ENCODE measurements at regions of chr7 and their contacts with region 1.

Region 1: GRCh38 chr7:11817111-11817740 is 14.8 kb downstream of the THSD7A start:
- DNase-seq: no peak
- ATAC-seq: peak; percentile 21 to 42; a peak in 1 of 6 replicates
- H3K4me3 ChIP-seq: no peak overlapping the region
- H3K27ac ChIP-seq: peak overlapping the region; percentile 67 to 75
- H3K4me1 ChIP-seq: peaks cover 42% of the 10 kb centered on the region
- CTCF ChIP-seq: no peak
- EP300 ChIP-seq: no peak
- POLR2A ChIP-seq: no peak
- RAD21 ChIP-seq: no peak

Region 2: DNA sequence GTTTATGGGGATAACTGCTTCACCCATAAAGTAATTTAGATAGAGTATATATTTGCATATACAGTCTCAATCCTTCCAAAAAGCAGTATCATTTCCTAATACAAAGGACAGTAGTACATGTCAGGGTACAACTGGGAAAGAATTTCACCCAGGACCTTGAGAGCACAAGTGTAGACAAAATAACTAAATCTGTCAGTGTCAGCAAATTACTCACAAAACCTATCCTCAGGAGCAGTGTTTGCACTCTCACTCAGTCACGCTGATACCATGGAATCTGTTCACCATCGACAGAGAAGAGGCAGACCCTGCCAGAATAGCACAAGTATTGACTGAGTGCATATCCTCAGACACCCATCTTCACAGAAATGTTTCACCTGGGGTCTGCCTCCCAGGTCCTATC is 1398.2 kb before region 1 on chr7:
- CTCF ChIA-PET with region 1: no interaction called
- POLR2A ChIA-PET with region 1: no interaction called
- DNase-seq: no peak
- ATAC-seq: no peak
- H3K4me3 ChIP-seq: no peak overlapping the region
- H3K27ac ChIP-seq: no peak overlapping the region
- H3K4me1 ChIP-seq: no peaks in the 10 kb centered on the region
- CTCF ChIP-seq: no peak
- EP300 ChIP-seq: no peak
- POLR2A ChIP-seq: no peak
- RAD21 ChIP-seq: no peak

Region 3: DNA sequence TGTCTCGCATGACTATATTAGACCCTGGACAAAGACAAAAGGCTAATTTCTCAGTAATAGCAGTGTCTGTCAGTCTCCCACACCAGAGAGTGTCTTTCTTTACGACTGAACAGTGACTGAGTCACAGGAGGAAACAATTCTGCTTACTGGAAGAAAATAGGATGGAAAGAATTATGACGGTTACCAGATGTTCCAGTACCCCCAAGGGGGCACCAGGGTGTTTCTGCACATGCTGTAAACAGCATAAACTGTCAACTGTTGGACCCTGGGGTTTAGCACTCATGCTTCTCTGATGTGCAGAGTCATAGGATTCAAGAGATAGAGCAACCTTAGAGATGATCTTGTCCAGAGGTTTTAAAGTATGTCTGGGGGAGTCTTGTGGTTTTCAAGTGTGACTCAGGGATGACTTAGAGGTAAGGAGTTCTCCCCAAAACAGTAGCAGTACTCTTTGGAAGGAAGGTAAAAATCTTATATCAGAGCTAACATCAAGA is 276.9 kb before region 1 on chr7:
- CTCF ChIA-PET with region 1: no interaction called
- POLR2A ChIA-PET with region 1: no interaction called
- DNase-seq: no peak
- ATAC-seq: peak in 1 of 2 experiments; percentile 39; a peak in 1 of 6 replicates
- H3K4me3 ChIP-seq: no peak overlapping the region
- H3K27ac ChIP-seq: 0 out of 6 replicates have a peak overlapping the region, but pooled peaks of 1 of the 2 experiments have one; percentile 18
- H3K4me1 ChIP-seq: 0 out of 3 replicates have a peak, but pooled peaks cover 5% of the 10 kb centered on the region
- CTCF ChIP-seq: no peak
- EP300 ChIP-seq: no peak
- POLR2A ChIP-seq: no peak
- RAD21 ChIP-seq: no peak

Region 4: DNA sequence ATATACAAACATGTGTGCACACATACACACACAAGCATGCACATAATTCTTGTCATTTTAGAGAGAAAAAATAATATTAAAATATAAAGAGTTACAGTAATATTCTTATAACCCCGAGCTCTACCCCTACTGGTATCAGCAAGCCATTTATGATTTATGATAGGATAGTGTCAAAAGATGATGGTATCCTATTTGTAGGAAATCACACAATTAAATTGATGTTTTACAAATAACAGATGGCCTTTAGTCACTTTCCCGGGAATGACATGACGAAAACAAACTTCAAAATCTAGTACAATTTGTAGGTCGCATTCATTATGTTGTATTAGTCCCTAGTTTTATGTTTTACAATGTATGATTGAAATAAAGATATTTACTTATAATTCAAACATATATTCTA is 22.0 kb before region 1 on chr7:
- CTCF ChIA-PET with region 1: no interaction called
- POLR2A ChIA-PET with region 1: no interaction called
- DNase-seq: no peak
- ATAC-seq: no peak
- H3K4me3 ChIP-seq: no peak overlapping the region
- H3K27ac ChIP-seq: peak overlapping the region; percentile 79 to 84
- H3K4me1 ChIP-seq: peaks cover 16% of the 10 kb centered on the region; the same call in 1 of the 3 replicates
- CTCF ChIP-seq: no peak
- EP300 ChIP-seq: no peak
- POLR2A ChIP-seq: no peak
- RAD21 ChIP-seq: no peak

Region 5: DNA sequence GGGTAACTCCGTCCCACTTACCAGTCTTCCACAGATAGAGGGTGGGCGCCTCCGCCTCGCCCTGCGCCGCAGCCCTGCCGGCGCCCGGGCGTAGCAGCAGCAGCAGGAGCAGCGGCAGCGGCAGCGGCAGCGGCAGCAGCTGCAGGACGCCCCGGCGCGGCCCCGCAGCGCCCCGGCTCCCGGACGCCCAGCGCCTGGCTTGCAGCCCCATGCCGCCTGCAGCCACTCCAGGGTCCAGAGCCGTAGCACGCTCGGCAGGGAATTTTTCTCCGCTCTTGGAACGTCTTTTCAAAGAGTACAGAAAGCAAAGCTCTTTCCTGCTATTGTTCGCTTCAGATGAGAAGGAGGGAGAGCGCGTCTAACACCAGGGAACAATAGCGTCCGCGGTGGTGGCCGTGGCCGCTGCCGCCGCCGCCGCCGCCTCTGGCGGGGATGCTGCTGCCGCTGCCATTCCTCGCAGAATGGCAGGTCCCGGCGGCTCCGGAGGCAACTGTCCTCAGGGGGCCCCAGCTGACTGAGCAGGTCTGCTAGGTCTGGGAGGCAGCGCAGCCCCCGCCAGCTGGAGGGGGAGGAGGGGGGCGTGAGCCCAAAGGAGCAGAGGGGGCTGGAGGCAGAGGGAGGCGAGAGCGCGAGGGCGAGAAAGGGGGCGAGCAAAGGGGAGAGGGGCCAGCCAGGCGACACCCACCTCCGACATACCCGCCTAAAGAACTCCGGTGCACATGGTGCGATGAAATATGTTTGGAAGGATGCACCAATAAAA is 14.7 kb after region 1 on chr7 and contains the start of gene THSD7A:
- CTCF ChIA-PET with region 1: interaction called, 13 read pairs
- POLR2A ChIA-PET with region 1: no interaction called
- DNase-seq: peak; percentile 46 to 52
- ATAC-seq: peak; percentile 91 to 95
- H3K4me3 ChIP-seq: peak within 1 kb of the TSS; percentile 54
- H3K27ac ChIP-seq: peak within 1 kb of the TSS; percentile 80 to 90
- H3K4me1 ChIP-seq: no peaks in the 10 kb centered on the region; the same call in 2 of the 3 replicates
- CTCF ChIP-seq: peak; percentile 27; the same call in 2 of the 3 replicates
- EP300 ChIP-seq: no peak
- POLR2A ChIP-seq: no peak
- RAD21 ChIP-seq: peak in 1 of 2 experiments; percentile 56; a peak in 3 of 5 replicates
- polyA plus RNA-seq, gene THSD7A: 11.8 and 12.9 TPM in 2 replicates

Region 6: GRCh38 chr7:12647364-12648219 is 830.4 kb after region 1 on chr7:
- CTCF ChIA-PET with region 1: no interaction called
- POLR2A ChIA-PET with region 1: no interaction called
- DNase-seq: peak; percentile 44 to 88
- ATAC-seq: peak; percentile 91 to 95
- H3K4me3 ChIP-seq: no peak overlapping the region
- H3K27ac ChIP-seq: peak overlapping the region; percentile 68 to 84
- H3K4me1 ChIP-seq: peaks cover 50% of the 10 kb centered on the region
- CTCF ChIP-seq: no peak
- EP300 ChIP-seq: peak in 1 of 2 experiments; percentile 61; a peak in 2 of 5 replicates
- POLR2A ChIP-seq: no peak
- RAD21 ChIP-seq: no peak; a peak in 1 of 5 replicates